PC-9 (cell line): ENCODE measurements at regions of chr10 and their contacts with region 1.

Region 1: GRCh38 chr10:24238519-24239252 is 29.7 kb downstream of the KIAA1217 start:
- DNase-seq: peak; percentile 65 to 86
- H3K4me3 ChIP-seq: peak overlapping the region; percentile 63
- H3K27ac ChIP-seq: peak overlapping the region; percentile 55
- H3K4me1 ChIP-seq: peaks cover 19% of the 10 kb centered on the region
- H3K27me3 ChIP-seq: no peaks in the 10 kb centered on the region
- CTCF ChIP-seq: no peak

Region 2: DNA sequence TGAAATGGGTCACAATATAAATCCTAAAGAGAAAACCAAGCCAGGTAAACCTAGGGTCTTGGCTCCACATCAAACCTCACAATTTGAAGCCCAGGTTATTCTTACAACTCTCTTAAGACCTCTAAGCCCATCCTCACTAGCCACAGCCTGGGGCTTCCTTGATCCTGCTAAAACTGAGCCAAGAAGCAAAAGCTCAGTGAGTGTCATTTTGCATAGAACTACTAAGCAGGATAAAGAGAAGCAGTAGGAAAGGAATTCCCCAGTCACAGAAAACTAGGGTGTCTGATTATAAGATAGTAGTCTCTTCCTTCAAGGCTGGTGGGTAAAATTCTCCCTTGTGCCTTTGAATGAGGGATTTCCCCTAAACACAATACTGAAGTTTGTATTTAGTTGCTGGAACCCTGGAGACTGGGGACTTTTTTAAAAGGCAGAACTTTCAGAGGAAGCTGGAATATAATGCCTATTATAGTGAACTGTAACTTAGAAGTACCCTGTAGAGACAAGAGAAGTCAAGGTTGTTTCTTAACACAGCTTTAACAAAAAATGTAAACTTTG is 226.4 kb before region 1 on chr10:
- CTCF ChIA-PET with region 1: no interaction called
- POLR2A ChIA-PET with region 1: interaction called, 25 read pairs
- intact Hi-C with region 1: no loop called
- DNase-seq: no peak
- H3K4me3 ChIP-seq: no peak overlapping the region
- H3K27ac ChIP-seq: no peak overlapping the region
- H3K4me1 ChIP-seq: no peaks in the 10 kb centered on the region
- H3K27me3 ChIP-seq: no peaks in the 10 kb centered on the region
- CTCF ChIP-seq: no peak

Region 3: DNA sequence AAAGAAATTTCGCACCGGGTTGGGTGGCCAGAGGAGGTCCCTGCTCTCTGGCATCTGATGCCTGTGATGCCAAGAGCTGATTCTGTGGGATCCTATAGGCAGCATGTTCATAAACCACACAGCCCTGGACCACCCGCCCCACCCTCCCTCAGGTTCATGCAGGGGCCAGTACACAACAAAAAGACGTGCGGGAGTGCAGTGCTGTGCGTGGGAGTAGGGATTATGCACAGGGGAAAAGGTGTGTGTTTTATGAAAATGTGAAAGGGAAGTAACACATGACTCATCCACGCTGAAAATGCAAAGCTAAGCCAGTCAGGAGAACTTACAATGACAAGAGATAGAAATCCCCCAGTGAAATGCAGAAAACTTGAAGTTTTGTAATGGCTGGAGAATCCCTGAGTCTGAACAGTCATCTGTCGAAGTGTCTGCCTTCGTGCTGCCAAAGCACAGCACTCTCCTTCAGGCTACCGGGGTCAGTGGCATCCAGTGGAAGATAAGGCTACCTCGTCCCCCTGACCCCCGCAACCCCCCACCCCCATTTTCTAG is 28.7 kb before region 1 on chr10:
- CTCF ChIA-PET with region 1: no interaction called
- POLR2A ChIA-PET with region 1: interaction called, 8 read pairs
- intact Hi-C with region 1: loop called (anchors 1 kb)
- DNase-seq: peak in 1 of 2 experiments; percentile 53
- H3K4me3 ChIP-seq: peak overlapping the region; percentile 47; the same call in 1 of the 2 replicates
- H3K27ac ChIP-seq: 0 out of 2 replicates have a peak overlapping the region, but pooled peaks have one; percentile 77
- H3K4me1 ChIP-seq: peaks cover 38% of the 10 kb centered on the region
- H3K27me3 ChIP-seq: no peaks in the 10 kb centered on the region
- CTCF ChIP-seq: no peak

Region 4: DNA sequence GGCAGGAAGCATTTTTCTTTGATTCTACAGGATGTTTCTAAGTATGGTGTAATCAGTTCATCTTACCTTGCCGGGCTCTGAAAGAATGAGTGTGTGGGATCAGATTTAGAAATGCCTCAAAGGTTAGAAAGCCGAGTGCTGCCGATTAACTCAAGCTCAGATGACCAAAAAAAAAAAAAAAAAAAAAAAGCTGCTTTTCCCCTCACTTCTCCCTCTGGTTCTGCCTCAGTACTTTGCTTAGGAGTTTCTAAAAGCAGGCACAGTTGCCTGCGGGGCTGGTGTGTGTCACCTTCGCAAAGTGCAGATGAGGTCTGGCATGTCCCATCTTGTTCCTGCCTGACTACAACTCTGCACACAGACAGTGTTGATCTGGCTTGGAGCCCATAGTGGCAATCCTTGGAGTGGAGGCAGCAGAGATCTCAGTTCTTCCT is 17.2 kb after region 1 on chr10:
- CTCF ChIA-PET with region 1: interaction called, 8 read pairs
- POLR2A ChIA-PET with region 1: interaction called, 10 read pairs
- intact Hi-C with region 1: loop called (anchors 2 kb)
- DNase-seq: peak; percentile 39 to 60
- H3K4me3 ChIP-seq: peak overlapping the region; percentile 41; the same call in 1 of the 2 replicates
- H3K27ac ChIP-seq: peak overlapping the region; percentile 57
- H3K4me1 ChIP-seq: peaks cover 45% of the 10 kb centered on the region
- H3K27me3 ChIP-seq: no peaks in the 10 kb centered on the region
- CTCF ChIP-seq: no peak

Region 5: GRCh38 chr10:24344279-24344678 is 105.6 kb after region 1 on chr10:
- CTCF ChIA-PET with region 1: interaction called, 7 read pairs
- POLR2A ChIA-PET with region 1: no interaction called
- intact Hi-C with region 1: loop called (anchors 5 kb)
- DNase-seq: peak; percentile 44 to 93
- H3K4me3 ChIP-seq: no peak overlapping the region
- H3K27ac ChIP-seq: peak overlapping the region; percentile 47
- H3K4me1 ChIP-seq: peaks cover 24% of the 10 kb centered on the region
- H3K27me3 ChIP-seq: no peaks in the 10 kb centered on the region
- CTCF ChIP-seq: no peak

Region 6: GRCh38 chr10:24483489-24484100 is 244.9 kb after region 1 on chr10:
- CTCF ChIA-PET with region 1: no interaction called
- POLR2A ChIA-PET with region 1: no interaction called
- intact Hi-C with region 1: no loop called
- DNase-seq: peak; percentile 85 to 94
- H3K4me3 ChIP-seq: no peak overlapping the region
- H3K27ac ChIP-seq: peak overlapping the region; percentile 58
- H3K4me1 ChIP-seq: peaks cover 31% of the 10 kb centered on the region
- H3K27me3 ChIP-seq: no peaks in the 10 kb centered on the region
- CTCF ChIP-seq: no peak